ENCODE measurements at regions of chr17 and their contacts with region 1.

Region 1: GRCh38 chr17:27968206-27968732 is 74.2 kb upstream of the NLK start:
- DNase-seq: peak; percentile 55 to 83 (median 69)
- ATAC-seq: peak; percentile 91 to 97 (median 96)
- H3K4me3 ChIP-seq: no peak overlapping the region
- H3K27ac ChIP-seq: peak overlapping the region in 4 of 12 donors; percentile 18 to 38 (median 32)
- H3K4me1 ChIP-seq: peaks cover 0 to 16% (median 0%) of the 10 kb centered on the region in 12 donors
- H3K27me3 ChIP-seq: no peaks in the 10 kb centered on the region
- CTCF ChIP-seq: no peak
- POLR2A ChIP-seq: no peak

Region 2: DNA sequence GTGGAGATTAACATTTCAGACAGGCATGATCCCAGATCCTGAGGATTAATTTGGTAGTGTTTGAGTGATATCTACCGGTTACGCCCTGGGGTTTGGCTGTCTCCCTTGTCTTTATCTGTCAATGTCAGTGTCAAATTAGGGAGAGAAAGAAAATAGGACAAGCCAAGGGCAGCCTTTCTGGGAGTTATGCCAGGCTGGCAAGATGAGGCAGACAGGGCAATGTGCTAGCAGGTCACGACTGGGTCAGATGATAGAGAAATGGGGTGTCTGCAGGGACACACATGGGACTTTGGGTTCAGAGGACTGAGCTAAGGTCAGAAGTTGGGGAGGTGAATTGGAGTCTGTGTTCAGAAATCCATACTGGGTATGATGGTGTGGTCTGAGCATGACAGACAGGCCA is 47.7 kb before region 1 on chr17:
- intact Hi-C with region 1: loop called in 1 of 10 experiments (anchors 2 kb)
- DNase-seq: peak in 4 of 5 donors; percentile 54 to 75 (median 67)
- ATAC-seq: peak; percentile 88 to 94 (median 91)
- H3K4me3 ChIP-seq: no peak overlapping the region
- H3K27ac ChIP-seq: peak overlapping the region in 8 of 12 donors; percentile 11 to 68 (median 48)
- H3K4me1 ChIP-seq: peaks cover 0 to 14% (median 1%) of the 10 kb centered on the region in 12 donors
- H3K27me3 ChIP-seq: no peaks in the 10 kb centered on the region
- CTCF ChIP-seq: no peak
- POLR2A ChIP-seq: no peak

Region 3: DNA sequence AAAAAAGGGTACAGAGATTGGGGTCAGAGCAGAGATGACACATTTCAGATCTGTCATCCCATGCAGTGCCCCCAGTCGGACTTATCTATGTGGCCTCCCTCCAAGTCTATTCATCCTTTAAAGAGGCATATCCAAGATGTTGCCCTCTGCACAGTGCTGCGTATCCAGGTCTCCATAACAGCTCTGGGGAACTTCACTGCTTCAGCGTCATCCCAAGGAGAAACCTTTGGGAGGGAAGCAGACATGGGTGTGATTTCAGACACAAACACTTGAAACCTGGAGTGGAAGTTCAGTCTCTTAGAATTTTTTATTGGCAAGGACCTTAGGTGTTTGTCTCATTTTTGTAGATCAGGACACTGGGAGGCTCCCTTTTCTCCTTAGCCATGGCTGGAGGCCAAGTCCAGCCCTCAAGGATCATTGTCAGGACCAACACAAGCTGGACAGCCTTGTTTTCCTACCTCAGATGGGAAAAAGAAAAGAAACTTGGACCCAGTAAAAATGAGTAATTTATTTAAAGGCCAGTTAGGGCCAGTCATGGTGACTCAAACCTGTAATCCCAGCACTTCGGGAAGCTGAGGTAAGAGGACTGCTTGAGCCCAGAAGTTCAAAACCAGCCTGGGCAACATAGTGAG is 50.3 kb after region 1 on chr17:
- intact Hi-C with region 1: loop called in 1 of 10 experiments (anchors 10 kb)
- DNase-seq: peak in 4 of 5 donors; percentile 31 to 59 (median 40)
- ATAC-seq: peak in 3 of 4 donors; percentile 59 to 90 (median 65)
- H3K4me3 ChIP-seq: no peak overlapping the region
- H3K27ac ChIP-seq: peak overlapping the region in 5 of 12 donors; percentile 8 to 53 (median 22)
- H3K4me1 ChIP-seq: peaks cover 0 to 5% (median 0%) of the 10 kb centered on the region in 12 donors
- H3K27me3 ChIP-seq: no peaks in the 10 kb centered on the region
- CTCF ChIP-seq: no peak
- POLR2A ChIP-seq: no peak